ENCODE measurements at regions of chr7 and their contacts with region 1.

Region 1: GRCh38 chr7:143410521-143411004 is 1.9 kb upstream of the EPHA1 start:
- DNase-seq: peak; percentile 85
- H3K4me3 ChIP-seq: no peak overlapping the region
- H3K27ac ChIP-seq: peak overlapping the region in 2 of 4 donors; percentile 29 to 65
- H3K4me1 ChIP-seq: peaks cover 0 to 41% (median 25%) of the 10 kb centered on the region in 4 donors
- H3K27me3 ChIP-seq: no peaks in the 10 kb centered on the region
- CTCF ChIP-seq: no peak
- EP300 ChIP-seq: no peak
- POLR2A ChIP-seq: no peak

Region 2: GRCh38 chr7:143362131-143363015 is 48.2 kb before region 1 on chr7 and contains the start of gene FAM131B:
- intact Hi-C with region 1: loop called (anchors 5 kb)
- DNase-seq: peak; percentile 67
- H3K4me3 ChIP-seq: peak within 1 kb of the TSS; percentile 53 to 86 (median 74)
- H3K27ac ChIP-seq: peak within 1 kb of the TSS in 3 of 4 donors; percentile 60 to 71 (median 66)
- H3K4me1 ChIP-seq: peaks cover 0 to 23% (median 17%) of the 10 kb centered on the region in 4 donors
- H3K27me3 ChIP-seq: peaks cover 0 to 16% (median 3%) of the 10 kb centered on the region in 3 donors
- CTCF ChIP-seq: no peak
- EP300 ChIP-seq: no peak
- POLR2A ChIP-seq: no peak
- total RNA-seq, gene FAM131B: 6.4 to 15.7 (median 6.8) TPM

Region 3: DNA sequence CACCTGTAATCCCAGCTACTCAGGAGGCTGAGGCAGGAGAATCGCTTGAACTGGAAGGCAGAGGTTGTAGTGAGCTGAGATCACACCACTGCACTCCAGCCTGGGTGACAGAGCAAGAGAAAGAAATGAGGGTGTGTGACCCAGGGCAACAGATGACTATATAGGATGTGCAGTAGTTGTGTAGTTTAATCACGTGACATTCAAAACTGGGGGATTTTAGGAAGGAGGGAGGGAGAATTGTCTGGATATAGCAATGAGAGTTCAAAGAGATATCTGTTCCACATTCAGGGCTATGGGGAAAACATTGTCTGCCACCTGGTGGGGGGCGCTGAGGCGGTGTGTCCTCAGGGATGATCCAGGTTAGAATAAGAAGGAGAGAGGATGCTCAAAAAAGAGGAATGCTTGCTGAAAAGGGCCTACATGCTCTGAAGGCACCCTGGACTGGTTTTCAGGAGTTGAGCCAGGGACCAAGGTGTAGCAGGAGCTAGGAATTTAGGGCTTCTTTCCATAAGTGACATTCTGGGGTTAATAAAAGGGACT is 37.2 kb before region 1 on chr7:
- intact Hi-C with region 1: no loop called
- DNase-seq: no peak
- H3K4me3 ChIP-seq: no peak overlapping the region
- H3K27ac ChIP-seq: no peak overlapping the region
- H3K4me1 ChIP-seq: peaks cover 0 to 44% (median 21%) of the 10 kb centered on the region in 4 donors
- H3K27me3 ChIP-seq: no peaks in the 10 kb centered on the region
- CTCF ChIP-seq: no peak
- EP300 ChIP-seq: no peak
- POLR2A ChIP-seq: no peak

Measured in sigmoid colon (tissue), 7 donors.